GM12878 (cell line): ENCODE measurements at regions of chr22 and their contacts with region 1.

Region 1: GRCh38 chr22:45863981-45864751 is 112.8 kb downstream of the WNT7B start:
- DNase-seq: no peak
- ATAC-seq: peak; percentile 82
- H3K4me3 ChIP-seq: no peak overlapping the region
- H3K27ac ChIP-seq: no peak overlapping the region
- H3K4me1 ChIP-seq: no peaks in the 10 kb centered on the region
- H3K27me3 ChIP-seq: peaks cover 3 to 4% of the 10 kb centered on the region in 2 experiments; a peak in 3 of 4 replicates
- CTCF ChIP-seq: peak; percentile 75 to 93 (median 92)
- EP300 ChIP-seq: no peak
- POLR2A ChIP-seq: no peak
- RAD21 ChIP-seq: peak; percentile 44

Region 2: DNA sequence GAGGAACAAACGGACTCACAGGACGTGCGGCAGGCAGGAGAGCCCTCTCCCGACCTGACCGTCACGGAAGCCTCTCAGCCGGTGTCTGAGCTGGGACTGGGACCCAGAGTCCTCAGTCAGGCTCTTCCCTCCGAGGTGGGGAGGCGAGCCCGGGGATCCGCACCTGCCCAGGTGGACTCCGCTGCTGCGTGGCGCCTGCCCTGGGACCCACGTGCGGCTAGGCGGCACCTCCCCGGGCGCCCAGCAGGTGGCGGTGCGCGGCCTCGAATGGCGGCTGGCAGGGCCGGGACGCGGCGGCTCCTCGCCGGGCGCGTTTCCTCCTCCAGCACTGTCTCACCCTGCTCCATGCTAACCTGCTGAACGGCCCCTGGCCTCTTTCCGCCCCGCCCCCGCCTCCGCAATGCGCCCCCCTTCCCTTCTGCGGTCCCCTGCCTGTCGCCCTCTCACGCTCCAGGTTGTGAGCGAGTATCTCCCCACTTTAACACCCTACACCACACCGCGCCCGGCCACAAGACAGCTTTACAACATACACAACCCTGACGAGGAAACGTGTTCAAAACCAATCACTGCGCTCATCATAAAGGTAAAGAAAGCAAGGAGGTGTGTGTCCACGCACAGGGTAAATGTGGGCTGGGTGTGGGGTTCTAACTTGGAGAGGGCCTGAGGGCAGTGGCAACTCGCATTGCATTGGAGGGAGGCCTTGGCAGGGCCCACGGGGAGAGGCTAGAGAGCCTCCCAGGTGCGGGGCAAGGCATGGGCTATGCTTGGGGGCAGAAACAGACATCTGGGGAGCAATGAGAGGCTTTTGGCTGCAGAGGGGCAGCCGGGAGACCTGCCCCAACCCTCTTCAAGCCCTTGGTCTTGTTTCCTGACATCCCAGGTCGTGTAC is 218.4 kb before region 1 on chr22:
- CTCF ChIA-PET with region 1: interaction called, 9 read pairs
- POLR2A ChIA-PET with region 1: no interaction called
- RAD21 ChIA-PET with region 1: interaction called, 5 read pairs
- SMC1A ChIA-PET with region 1: interaction called, 12 read pairs
- in situ Hi-C with region 1: no loop called
- intact Hi-C with region 1: loop called (anchors 10 kb)
- DNase-seq: no peak
- ATAC-seq: peak; percentile 100
- H3K4me3 ChIP-seq: no peak overlapping the region
- H3K27ac ChIP-seq: no peak overlapping the region
- H3K4me1 ChIP-seq: no peaks in the 10 kb centered on the region; the same call in 1 of the 2 replicates
- H3K27me3 ChIP-seq: no peaks in the 10 kb centered on the region; a peak in 1 of 4 replicates
- CTCF ChIP-seq: peak; percentile 78 to 94 (median 82)
- EP300 ChIP-seq: no peak
- POLR2A ChIP-seq: no peak
- RAD21 ChIP-seq: peak; percentile 96

Region 3: GRCh38 chr22:45845076-45845487 is 19.1 kb before region 1 on chr22:
- CTCF ChIA-PET with region 1: interaction called, 21 read pairs
- POLR2A ChIA-PET with region 1: no interaction called
- RAD21 ChIA-PET with region 1: interaction called, 3 read pairs
- SMC1A ChIA-PET with region 1: interaction called, 3 read pairs
- in situ Hi-C with region 1: no loop called
- intact Hi-C with region 1: no loop called
- DNase-seq: no peak
- ATAC-seq: no peak
- H3K4me3 ChIP-seq: no peak overlapping the region
- H3K27ac ChIP-seq: no peak overlapping the region
- H3K4me1 ChIP-seq: no peaks in the 10 kb centered on the region
- H3K27me3 ChIP-seq: no peaks in the 10 kb centered on the region
- CTCF ChIP-seq: no peak
- EP300 ChIP-seq: no peak
- POLR2A ChIP-seq: no peak
- RAD21 ChIP-seq: no peak

Region 4: GRCh38 chr22:45876136-45877035 is 12.2 kb after region 1 on chr22:
- CTCF ChIA-PET with region 1: interaction called, 32 read pairs
- POLR2A ChIA-PET with region 1: no interaction called
- RAD21 ChIA-PET with region 1: interaction called, 4 read pairs
- SMC1A ChIA-PET with region 1: interaction called, 4 read pairs
- in situ Hi-C with region 1: no loop called
- intact Hi-C with region 1: no loop called
- DNase-seq: no peak
- ATAC-seq: no peak
- H3K4me3 ChIP-seq: no peak overlapping the region
- H3K27ac ChIP-seq: no peak overlapping the region
- H3K4me1 ChIP-seq: no peaks in the 10 kb centered on the region
- H3K27me3 ChIP-seq: peaks cover 0 to 2% of the 10 kb centered on the region in 2 experiments; a peak in 3 of 4 replicates
- CTCF ChIP-seq: no peak
- EP300 ChIP-seq: no peak
- POLR2A ChIP-seq: no peak
- RAD21 ChIP-seq: no peak

Region 5: DNA sequence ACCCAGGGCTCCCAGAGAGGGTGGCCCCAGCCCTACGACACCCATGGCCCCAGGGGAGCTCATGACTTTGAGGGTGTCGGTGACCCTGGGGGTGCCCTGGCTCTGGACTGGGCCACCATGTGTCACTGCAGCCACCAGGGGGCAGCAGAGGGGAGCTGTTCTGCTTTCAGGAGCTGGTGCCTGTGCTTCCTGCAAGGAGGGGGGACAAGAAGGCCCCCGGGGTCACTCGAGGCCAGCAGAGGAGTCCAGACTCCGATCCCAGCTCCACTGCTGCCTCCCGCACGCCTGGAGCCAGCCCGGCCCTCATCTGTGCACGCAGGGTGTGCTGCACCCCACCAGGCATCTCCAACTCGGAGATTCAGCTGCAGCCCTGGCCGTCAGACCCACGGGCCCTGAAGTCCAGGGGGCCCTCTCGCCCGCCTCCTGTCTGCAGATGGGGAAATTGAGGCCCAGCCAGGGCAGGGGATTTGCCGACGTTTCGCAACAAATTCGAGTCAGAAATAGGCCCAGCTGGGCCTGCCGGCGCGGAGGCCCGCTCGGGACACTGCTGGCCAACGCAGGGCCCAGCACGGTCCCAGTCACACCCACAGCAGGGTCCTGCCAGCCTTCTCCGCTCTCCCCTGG is 142.3 kb after region 1 on chr22:
- CTCF ChIA-PET with region 1: no interaction called
- POLR2A ChIA-PET with region 1: no interaction called
- RAD21 ChIA-PET with region 1: no interaction called
- SMC1A ChIA-PET with region 1: no interaction called
- in situ Hi-C with region 1: no loop called
- intact Hi-C with region 1: no loop called
- DNase-seq: no peak
- ATAC-seq: peak; percentile 97
- H3K4me3 ChIP-seq: no peak overlapping the region
- H3K27ac ChIP-seq: no peak overlapping the region
- H3K4me1 ChIP-seq: no peaks in the 10 kb centered on the region
- H3K27me3 ChIP-seq: no peaks in the 10 kb centered on the region
- CTCF ChIP-seq: peak; percentile 78 to 90 (median 88)
- EP300 ChIP-seq: no peak
- POLR2A ChIP-seq: no peak
- RAD21 ChIP-seq: peak; percentile 80